Ovary (tissue), 10 donors: ENCODE measurements at regions of chr14 and their contacts with region 1.

Region 1: DNA sequence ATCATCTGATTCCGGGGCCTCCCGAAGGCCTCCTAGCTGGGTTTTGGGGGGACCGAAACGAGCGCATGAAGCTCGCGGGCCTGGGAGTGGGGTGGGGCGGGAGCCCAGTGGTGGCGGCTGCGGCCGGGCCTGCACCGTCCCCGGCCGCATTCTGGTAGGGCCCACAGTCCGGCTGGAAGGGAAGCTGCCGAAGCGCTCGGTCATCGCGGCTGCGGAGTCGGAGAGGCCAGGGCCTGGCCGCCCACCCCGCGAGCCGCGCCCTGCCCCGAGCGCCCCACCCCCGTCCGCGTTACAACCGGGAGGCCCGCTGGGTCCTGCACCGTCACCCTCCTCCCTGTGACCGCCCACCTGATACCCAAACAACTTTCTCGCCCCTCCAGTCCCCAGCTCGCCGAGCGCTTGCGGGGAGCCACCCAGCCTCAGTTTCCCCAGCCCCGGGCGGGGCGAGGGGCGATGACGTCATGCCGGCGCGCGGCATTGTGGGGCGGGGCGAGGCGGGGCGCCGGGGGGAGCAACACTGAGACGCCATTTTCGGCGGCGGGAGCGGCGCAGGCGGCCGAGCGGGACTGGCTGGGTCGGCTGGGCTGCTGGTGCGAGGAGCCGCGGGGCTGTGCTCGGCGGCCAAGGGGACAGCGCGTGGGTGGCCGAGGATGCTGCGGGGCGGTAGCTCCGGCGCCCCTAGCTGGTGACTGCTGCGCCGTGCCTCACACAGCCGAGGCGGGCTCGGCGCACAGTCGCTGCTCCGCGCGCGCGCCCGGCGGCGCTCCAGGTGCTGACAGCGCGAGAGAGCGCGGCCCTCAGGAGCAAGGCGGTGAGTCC is at the start of gene KLC1:
- DNase-seq: peak; percentile 87 to 95 (median 92)
- H3K4me3 ChIP-seq: peak within 1 kb of the TSS; percentile 67
- H3K27ac ChIP-seq: peak within 1 kb of the TSS; percentile 97 to 99
- H3K4me1 ChIP-seq: peaks cover 4% of the 10 kb centered on the region
- H3K27me3 ChIP-seq: no peaks in the 10 kb centered on the region
- CTCF ChIP-seq: peak in 2 of 3 donors; percentile 10 to 32
- EP300 ChIP-seq: no peak
- POLR2A ChIP-seq: peak; percentile 97
- total RNA-seq, gene KLC1: 125 to 191 (median 149) TPM

Region 2: DNA sequence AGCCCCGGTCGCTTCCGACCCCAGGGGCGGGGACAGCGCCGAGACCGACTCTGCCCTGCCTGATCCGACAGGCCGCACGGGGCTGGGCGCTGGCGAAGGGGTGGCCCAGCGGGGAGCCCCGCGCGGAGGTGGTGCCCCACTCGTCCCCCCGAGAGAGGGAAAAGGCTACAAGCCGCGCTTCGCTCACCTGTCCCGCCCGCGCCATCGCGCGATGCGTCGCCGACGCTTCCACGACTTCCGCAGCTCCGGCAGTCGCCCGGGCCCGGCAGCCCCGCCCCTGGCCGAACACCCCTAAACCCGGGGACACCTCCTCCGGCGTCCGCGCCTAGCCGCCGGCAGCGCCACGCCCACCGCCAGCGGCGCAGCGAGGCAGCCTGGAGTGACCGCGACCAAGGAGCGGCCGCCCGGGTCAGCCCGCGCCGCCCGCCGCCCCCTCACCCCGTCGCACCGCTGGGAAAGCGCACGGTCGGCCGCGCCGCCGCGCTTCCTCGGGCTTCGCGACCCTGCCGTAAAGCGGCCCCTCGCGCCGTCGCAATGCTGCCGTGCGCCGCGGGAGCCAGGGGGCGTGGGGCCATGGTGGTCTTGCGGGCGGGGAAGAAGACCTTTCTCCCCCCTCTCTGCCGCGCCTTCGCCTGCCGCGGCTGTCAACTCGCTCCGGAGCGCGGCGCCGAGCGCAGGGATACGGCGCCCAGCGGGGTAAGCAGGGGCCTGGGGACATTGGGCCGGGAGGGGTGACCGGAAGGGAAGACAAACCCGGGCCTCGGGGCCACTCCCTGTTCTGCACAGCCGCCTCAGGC is 66.3 kb before region 1 on chr14 and contains the starts of genes BAG5 and COA8:
- intact Hi-C with region 1: loop called in 1 of 4 experiments (anchors 10 kb)
- DNase-seq: peak; percentile 78 to 90 (median 85)
- H3K4me3 ChIP-seq: peak within 1 kb of the TSS; percentile 93
- H3K27ac ChIP-seq: peak within 1 kb of the TSS; percentile 94 to 98
- H3K4me1 ChIP-seq: peaks cover 8% of the 10 kb centered on the region
- H3K27me3 ChIP-seq: no peaks in the 10 kb centered on the region
- CTCF ChIP-seq: peak in 1 of 3 donors; percentile 22
- EP300 ChIP-seq: no peak
- POLR2A ChIP-seq: peak; percentile 57
- total RNA-seq, gene BAG5: 13.2 to 29.1 (median 24.4) TPM
- total RNA-seq, gene COA8: 11.4 to 28.1 (median 26.6) TPM

Region 3: GRCh38 chr14:103613517-103613916 is 15.4 kb before region 1 on chr14:
- intact Hi-C with region 1: no loop called
- DNase-seq: no peak
- H3K4me3 ChIP-seq: no peak overlapping the region
- H3K27ac ChIP-seq: no peak overlapping the region
- H3K4me1 ChIP-seq: no peaks in the 10 kb centered on the region
- H3K27me3 ChIP-seq: no peaks in the 10 kb centered on the region
- CTCF ChIP-seq: no peak
- EP300 ChIP-seq: no peak
- POLR2A ChIP-seq: no peak

Region 4: DNA sequence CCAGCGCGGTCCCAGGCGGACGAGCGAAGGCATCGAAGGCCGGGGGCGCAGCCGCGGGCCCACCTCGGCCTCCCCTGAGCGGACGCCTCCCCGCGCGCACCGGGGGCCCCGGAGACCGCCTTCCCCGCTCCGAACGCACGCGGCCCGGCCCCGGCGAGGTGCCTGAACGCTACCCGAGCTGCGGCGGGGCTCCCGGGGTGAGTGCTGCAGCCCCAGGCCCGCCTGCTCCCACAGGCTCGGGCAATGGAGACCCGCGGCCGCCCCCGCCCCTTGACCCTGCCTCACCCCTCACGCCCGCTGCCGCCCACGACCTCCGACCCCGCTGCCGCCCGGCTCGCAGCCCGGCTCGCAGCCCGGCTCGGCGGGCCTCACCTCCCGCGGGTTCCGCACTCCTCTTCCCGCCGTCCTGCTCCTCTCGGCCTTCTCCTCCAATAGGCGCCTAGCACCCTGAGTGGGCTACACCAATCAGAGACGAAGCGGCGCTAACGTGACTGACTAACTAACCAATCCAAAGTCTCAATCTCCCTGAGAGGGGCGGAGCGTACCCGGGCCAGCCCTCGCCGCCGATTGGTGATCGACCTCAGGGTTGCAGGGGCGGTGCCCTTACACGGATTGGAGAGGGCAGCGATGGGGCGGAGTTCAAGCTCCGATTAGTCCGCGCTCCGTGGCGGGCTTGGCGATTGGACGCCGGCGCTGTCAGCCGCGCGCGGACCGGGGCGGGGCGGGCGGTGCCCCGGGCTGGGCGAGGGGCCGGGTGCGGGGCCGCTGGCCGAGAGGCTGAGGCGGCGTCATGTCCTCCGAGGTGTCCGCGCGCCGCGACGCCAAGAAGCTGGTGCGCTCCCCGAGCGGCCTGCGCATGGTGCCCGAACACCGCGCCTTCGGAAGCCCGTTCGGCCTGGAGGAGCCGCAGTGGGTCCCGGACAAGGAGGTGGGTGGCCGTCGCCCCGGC is 86.4 kb after region 1 on chr14 and contains the starts of genes XRCC3 and ZFYVE21:
- intact Hi-C with region 1: loop called in 1 of 4 experiments (anchors 5 kb)
- DNase-seq: peak; percentile 99 to 100 (median 100)
- H3K4me3 ChIP-seq: peak within 1 kb of the TSS; percentile 65
- H3K27ac ChIP-seq: peak within 1 kb of the TSS; percentile 26 to 80
- H3K4me1 ChIP-seq: peaks cover 25% of the 10 kb centered on the region
- H3K27me3 ChIP-seq: no peaks in the 10 kb centered on the region
- CTCF ChIP-seq: no peak
- EP300 ChIP-seq: no peak
- POLR2A ChIP-seq: peak; percentile 80
- total RNA-seq, gene XRCC3: 1.4 to 8.5 (median 2.9) TPM
- total RNA-seq, gene ZFYVE21: 75.6 to 110 (median 83.1) TPM